Mammary epithelial cell (primary cell): ENCODE measurements at regions of chr11 and their contacts with region 1.

Region 1: DNA sequence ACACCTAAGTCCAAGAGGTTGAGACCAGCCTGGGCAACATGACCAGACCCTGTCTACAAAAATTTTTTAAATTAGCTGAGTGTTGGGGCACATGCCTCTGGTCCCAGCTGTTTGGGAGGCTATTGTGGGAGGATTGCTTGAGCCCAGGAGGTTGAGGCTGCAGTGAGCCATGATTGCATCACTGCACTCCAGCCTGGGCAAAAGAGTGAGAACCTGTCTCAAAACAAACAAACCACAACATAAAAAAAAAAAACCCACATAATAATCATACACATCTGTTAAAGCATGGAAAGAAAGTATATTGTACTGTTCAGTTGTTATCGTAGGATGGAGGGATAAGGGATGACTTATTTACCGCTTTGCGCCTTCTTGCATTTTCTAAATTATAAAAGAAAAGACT is 35.9 kb upstream of the GRK2 start:
- DNase-seq: peak; percentile 14
- H3K4me3 ChIP-seq: no peak overlapping the region
- H3K27ac ChIP-seq: no peak overlapping the region
- H3K4me1 ChIP-seq: no peaks in the 10 kb centered on the region
- H3K27me3 ChIP-seq: no peaks in the 10 kb centered on the region
- CTCF ChIP-seq: no peak

Region 2: GRCh38 chr11:66950113-66950535 is 280.3 kb before region 1 on chr11:
- CTCF ChIA-PET with region 1: no interaction called
- dilution Hi-C with region 1: loop called (anchors 5 kb)
- in situ Hi-C with region 1: no loop called
- intact Hi-C with region 1: no loop called
- DNase-seq: peak; percentile 81
- H3K4me3 ChIP-seq: no peak overlapping the region
- H3K27ac ChIP-seq: peak overlapping the region; percentile 25
- H3K4me1 ChIP-seq: peaks cover 11% of the 10 kb centered on the region
- H3K27me3 ChIP-seq: no peaks in the 10 kb centered on the region
- CTCF ChIP-seq: no peak

Region 3: GRCh38 chr11:67194096-67194495 is 36.3 kb before region 1 on chr11:
- CTCF ChIA-PET with region 1: no interaction called
- dilution Hi-C with region 1: loop called (anchors 5 kb)
- in situ Hi-C with region 1: no loop called
- intact Hi-C with region 1: no loop called
- DNase-seq: no peak
- H3K4me3 ChIP-seq: no peak overlapping the region
- H3K27ac ChIP-seq: no peak overlapping the region
- H3K4me1 ChIP-seq: no peaks in the 10 kb centered on the region
- H3K27me3 ChIP-seq: no peaks in the 10 kb centered on the region
- CTCF ChIP-seq: no peak